Activated CD4-positive, alpha-beta T cell treated with anti-CD3 and anti-CD28 coated beads, Interleukin-2, amount 10 ng/mL, durations not matched to agents 7 days and 5 days (primary cell): ENCODE measurements at regions of chr17 and their contacts with region 1.

Region 1: GRCh38 chr17:18025241-18025944 is 13.6 kb downstream of the ATPAF2 start:
- DNase-seq: peak; percentile 18
- H3K4me3 Mint-ChIP-seq: no peak overlapping the region
- H3K27ac Mint-ChIP-seq: no peak overlapping the region
- H3K4me1 Mint-ChIP-seq: peaks cover 19% of the 10 kb centered on the region
- H3K27me3 Mint-ChIP-seq: no peaks in the 10 kb centered on the region

Region 2: DNA sequence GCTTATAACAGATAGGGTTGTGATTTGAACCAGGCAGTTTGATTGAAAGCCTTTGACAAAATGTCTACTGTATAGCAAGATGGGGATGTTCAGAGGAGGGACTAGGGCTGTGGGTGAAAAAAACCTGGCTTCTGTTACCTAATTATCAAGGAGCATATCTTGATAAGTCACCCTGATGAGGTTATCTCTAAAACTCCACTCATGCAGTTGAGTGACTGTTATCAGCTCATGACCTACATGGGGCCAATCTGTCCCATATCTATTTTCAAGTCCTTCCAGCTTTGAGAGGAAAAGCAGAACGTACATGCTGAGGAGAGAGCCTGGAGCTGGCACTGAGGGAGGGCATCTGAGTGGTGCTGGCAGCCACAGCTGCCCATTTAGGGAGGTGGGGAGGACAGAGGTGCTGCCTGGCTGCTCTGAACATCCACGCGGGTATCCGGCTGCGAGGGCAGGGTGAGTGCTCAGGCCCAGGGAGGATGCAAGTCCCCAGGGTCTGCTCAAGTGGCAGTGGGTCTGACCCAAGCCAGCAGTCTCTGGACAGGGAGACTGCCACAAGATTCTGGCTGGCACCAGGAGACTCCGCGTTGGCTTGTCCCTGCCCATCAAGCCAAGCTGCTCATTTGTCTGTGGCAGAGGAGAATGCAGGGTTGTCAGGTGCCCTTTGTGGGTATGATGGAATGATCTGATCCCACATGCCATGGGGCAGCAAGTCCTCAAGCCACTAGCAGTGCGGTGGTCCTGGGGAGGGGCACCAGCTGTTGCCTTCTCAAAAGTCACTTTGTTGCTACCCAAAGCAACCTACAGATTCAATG is 15.6 kb before region 1 on chr17:
- CTCF ChIA-PET with region 1: interaction called, 10 read pairs
- POLR2A ChIA-PET with region 1: no interaction called
- DNase-seq: no peak
- H3K4me3 Mint-ChIP-seq: no peak overlapping the region
- H3K27ac Mint-ChIP-seq: no peak overlapping the region
- H3K4me1 Mint-ChIP-seq: peaks cover 6% of the 10 kb centered on the region
- H3K27me3 Mint-ChIP-seq: no peaks in the 10 kb centered on the region